ENCODE measurements at regions of chr17 and their contacts with region 1.

Region 1: GRCh38 chr17:17356149-17356930 is 53.2 kb downstream of the NT5M start:
- DNase-seq: peak; percentile 90
- H3K4me3 ChIP-seq: no peak overlapping the region; a peak in 1 of 4 replicates
- H3K27ac ChIP-seq: no peak overlapping the region
- H3K4me1 ChIP-seq: peaks cover 0 to 26% of the 10 kb centered on the region in 2 experiments; a peak in 1 of 4 replicates
- H3K27me3 ChIP-seq: no peaks in the 10 kb centered on the region
- CTCF ChIP-seq: peak; percentile 99
- EP300 ChIP-seq: no peak
- RAD21 ChIP-seq: peak; percentile 100

Region 2: DNA sequence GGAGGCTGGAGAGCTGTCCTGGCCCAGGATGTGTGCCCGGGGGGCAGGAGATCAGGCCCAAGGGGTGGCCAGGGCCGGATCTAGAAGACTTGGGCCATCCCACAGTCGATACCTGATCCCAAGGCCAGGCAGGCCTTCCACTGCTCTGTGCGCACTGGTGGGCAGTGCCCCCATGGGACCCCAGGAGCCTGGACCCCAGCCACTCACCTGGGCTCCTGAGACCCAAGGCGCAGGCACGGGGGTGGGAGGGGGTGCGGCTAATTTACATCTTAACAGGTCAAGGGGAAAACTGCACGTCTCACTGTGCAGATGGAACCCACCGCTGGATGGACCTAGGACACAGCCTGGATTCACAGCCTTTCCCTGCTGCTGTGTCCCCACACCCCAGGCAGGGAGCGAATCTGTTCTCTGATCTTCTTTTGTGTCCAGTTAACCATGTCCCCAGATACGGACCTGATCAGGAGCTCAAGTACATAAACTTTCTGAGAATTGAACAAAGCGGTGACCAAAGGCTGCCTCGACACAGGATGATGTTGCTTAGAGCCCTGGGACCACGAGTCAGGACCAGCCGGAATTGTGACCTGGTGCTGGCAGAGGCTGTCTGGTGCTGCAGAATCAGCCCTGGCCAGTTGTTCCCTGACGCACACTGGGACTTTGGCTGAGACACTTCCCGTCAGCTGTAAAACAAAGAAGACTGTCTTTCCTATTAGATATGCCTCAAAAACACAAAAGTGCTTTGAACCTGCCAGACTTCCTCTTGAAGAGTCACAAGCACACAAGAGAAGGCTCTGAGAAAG is 445.0 kb before region 1 on chr17:
- CTCF ChIA-PET with region 1: no interaction called
- POLR2A ChIA-PET with region 1: no interaction called
- DNase-seq: no peak
- H3K4me3 ChIP-seq: no peak overlapping the region
- H3K27ac ChIP-seq: no peak overlapping the region
- H3K4me1 ChIP-seq: no peaks in the 10 kb centered on the region
- H3K27me3 ChIP-seq: peaks cover 59% of the 10 kb centered on the region
- CTCF ChIP-seq: no peak
- EP300 ChIP-seq: no peak
- RAD21 ChIP-seq: no peak

Region 3: GRCh38 chr17:17344462-17345293 is 11.7 kb before region 1 on chr17:
- CTCF ChIA-PET with region 1: interaction called, 15 read pairs
- POLR2A ChIA-PET with region 1: no interaction called
- DNase-seq: no peak
- H3K4me3 ChIP-seq: no peak overlapping the region
- H3K27ac ChIP-seq: no peak overlapping the region
- H3K4me1 ChIP-seq: no peaks in the 10 kb centered on the region; a peak in 1 of 4 replicates
- H3K27me3 ChIP-seq: no peaks in the 10 kb centered on the region
- CTCF ChIP-seq: no peak
- EP300 ChIP-seq: no peak
- RAD21 ChIP-seq: no peak

Region 4: DNA sequence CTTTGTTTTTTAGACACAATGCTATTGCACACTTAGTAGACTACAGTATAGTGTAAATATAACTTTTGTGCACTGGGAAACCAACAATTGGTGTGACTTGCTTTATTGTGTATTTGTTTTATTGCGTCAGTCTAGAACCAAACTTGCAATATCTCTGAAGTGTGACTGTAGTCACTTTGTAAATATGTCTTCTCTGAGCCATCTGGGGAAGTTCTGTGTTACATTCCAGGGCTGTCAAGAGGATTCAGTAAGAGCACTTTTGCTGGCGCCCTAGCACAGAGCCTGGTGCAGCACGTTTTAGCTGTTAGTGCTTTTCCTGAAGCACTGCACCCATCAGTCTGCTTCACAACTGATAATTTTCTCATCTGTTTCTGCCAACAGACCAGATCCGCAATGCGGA is 20.0 kb after region 1 on chr17:
- CTCF ChIA-PET with region 1: interaction called, 28 read pairs
- POLR2A ChIA-PET with region 1: no interaction called
- DNase-seq: no peak
- H3K4me3 ChIP-seq: no peak overlapping the region
- H3K27ac ChIP-seq: peak overlapping the region in 1 of 2 experiments; percentile 78; a peak in 2 of 4 replicates
- H3K4me1 ChIP-seq: peaks cover 0 to 18% of the 10 kb centered on the region in 2 experiments; a peak in 1 of 4 replicates
- H3K27me3 ChIP-seq: peaks cover 16% of the 10 kb centered on the region; the same call in 1 of the 2 replicates
- CTCF ChIP-seq: no peak
- EP300 ChIP-seq: no peak
- RAD21 ChIP-seq: no peak

Region 5: DNA sequence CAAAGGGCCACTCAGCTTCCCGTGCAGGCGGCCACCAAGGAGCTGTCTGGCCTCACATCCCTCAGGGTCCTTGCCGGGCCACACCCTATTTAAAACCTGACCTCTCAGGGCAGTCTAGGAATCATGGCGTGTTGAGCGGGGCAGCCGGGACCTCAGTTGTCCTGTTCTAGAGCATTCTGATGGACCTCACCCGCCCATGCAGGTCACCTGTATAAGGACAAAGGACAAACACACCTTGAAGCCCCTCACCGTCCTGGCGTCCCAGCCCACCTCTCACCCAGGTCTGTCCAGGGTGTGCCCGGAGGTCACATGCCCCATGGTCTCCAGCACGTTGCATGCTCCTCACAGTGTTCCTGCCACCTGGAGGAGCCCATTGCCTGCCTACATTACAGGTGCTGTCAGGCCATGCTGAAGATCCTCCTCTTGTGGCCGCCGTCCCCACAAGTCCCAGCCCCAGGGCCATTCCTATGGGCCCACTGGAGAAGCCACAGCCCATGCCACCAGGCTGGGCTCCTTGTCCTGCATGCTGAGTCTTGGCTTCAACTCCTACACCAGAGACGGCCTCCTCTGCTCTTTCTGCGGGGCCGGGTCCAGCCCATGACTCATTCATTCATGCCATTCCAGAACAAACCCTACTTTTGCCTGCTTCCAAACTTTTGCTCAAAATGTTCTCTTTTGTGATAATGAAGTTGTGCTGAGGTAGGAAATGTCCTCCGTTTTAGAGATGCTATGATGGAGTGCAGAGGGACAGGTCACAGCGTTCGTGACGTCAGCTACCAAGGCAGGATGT is 188.9 kb after region 1 on chr17:
- CTCF ChIA-PET with region 1: interaction called, 12 read pairs
- POLR2A ChIA-PET with region 1: no interaction called
- DNase-seq: no peak
- H3K4me3 ChIP-seq: no peak overlapping the region
- H3K27ac ChIP-seq: peak overlapping the region in 1 of 2 experiments; percentile 96; a peak in 2 of 4 replicates
- H3K4me1 ChIP-seq: peaks cover 0 to 69% of the 10 kb centered on the region in 2 experiments; a peak in 2 of 4 replicates
- H3K27me3 ChIP-seq: no peaks in the 10 kb centered on the region
- CTCF ChIP-seq: no peak
- EP300 ChIP-seq: no peak
- RAD21 ChIP-seq: no peak

Region 6: DNA sequence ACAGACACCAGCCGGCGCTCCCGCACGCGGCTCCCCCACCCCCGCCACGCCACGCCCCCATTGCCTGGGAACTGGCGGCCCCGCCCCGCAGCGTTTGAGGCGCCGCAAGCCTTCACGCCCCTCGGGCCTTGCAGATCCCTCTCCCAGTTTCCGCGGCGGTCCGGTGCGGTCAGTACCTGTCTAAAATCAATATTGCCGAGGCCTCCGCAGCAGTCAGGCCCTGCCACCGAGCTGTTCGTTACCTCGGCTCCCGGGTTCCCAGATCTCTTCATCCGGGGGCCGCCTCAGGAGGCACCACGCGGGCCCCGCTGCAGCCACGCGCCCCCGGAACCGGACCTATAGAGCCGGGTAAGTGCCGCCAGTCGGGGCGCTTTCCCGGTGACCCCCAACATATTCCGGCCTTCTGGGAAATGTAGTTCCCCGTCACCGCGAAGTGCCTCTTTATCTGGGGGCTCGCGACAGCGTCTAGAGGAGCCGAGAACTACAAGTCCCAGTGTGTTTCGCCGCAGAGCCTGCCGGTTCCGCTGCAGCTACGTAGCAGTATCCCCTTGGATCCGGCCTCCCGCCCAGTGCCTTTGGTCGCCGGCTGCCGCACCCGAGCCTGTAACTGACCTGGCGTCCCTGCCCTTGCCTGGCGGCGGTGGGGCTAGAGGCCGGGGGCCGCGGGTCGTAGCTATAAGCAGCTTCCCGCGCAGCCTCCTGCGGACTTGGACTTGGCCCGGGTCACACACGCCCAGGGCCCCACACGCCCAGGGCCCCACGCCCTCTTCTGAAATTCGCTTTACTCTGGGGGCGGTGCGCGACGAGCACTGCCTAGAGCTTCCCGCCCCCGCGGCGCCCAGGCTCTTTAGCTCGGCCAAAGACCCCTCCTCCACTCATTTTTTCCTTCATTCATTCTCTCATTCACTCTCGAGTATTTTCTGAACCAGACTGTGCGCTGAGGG is 235.3 kb after region 1 on chr17 and contains the start of gene PEMT:
- CTCF ChIA-PET with region 1: interaction called, 24 read pairs
- POLR2A ChIA-PET with region 1: no interaction called
- DNase-seq: peak; percentile 96
- H3K4me3 ChIP-seq: peak within 1 kb of the TSS; percentile 85 to 88
- H3K27ac ChIP-seq: peak within 1 kb of the TSS; percentile 77 to 92
- H3K4me1 ChIP-seq: peaks cover 4 to 21% of the 10 kb centered on the region in 2 experiments; a peak in 1 of 4 replicates
- H3K27me3 ChIP-seq: no peaks in the 10 kb centered on the region
- CTCF ChIP-seq: no peak
- EP300 ChIP-seq: no peak
- RAD21 ChIP-seq: no peak
- polyA plus RNA-seq, gene PEMT: 49.8 and 52.8 TPM in 2 replicates

Region 7: GRCh38 chr17:17641621-17642409 is 285.5 kb after region 1 on chr17:
- CTCF ChIA-PET with region 1: interaction called, 155 read pairs
- POLR2A ChIA-PET with region 1: no interaction called
- DNase-seq: peak; percentile 74
- H3K4me3 ChIP-seq: peak overlapping the region in 1 of 2 experiments; percentile 30; a peak in 1 of 4 replicates
- H3K27ac ChIP-seq: no peak overlapping the region
- H3K4me1 ChIP-seq: no peaks in the 10 kb centered on the region; a peak in 1 of 4 replicates
- H3K27me3 ChIP-seq: no peaks in the 10 kb centered on the region
- CTCF ChIP-seq: peak; percentile 86
- EP300 ChIP-seq: no peak
- RAD21 ChIP-seq: peak; percentile 97